CD14-positive monocyte (primary cell): ENCODE measurements at regions of chr6 and their contacts with region 1.

Region 1: DNA sequence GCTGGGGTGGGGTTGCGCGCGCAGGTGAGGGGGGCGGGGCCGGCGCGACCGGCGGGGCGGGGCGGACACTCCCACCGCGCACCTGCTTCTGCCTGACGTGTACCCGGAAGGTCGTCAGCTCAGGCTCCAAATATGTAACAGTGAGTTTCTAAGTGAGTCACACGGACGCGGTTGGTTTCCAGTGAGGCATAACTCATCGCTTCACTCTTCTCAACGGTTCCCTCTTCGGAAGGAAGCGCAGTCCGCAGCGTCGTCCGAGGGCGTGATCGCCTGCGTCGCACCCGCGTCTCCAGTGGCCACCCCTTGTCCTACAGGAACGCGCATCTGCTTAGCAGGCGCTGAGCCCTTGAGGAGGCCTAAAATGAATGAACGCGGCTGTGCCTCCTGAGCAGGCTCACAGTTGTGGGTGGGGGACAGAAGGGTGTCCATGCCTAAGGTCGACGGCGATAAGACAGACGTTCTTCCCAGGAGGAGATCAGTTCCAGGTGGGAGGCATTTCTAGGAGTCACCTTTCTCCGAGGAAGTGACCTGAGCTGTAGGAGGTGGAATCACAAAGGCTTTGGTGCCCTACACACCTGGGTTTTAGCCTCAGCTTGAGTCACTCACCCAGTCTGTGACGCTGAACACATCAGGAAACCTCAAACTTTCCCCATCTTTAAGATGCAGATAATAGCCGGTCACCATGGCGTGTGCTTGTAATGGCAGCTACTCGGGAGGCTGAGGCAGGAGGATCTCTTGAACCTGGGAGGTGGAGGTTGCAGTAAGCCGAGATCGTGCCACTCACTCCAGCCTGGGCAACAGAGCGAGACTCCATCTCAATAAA is 50.9 kb upstream of the EZR start:
- DNase-seq: peak; percentile 98 to 99 (median 99)
- H3K4me3 ChIP-seq: peak overlapping the region; percentile 39 to 72 (median 58)
- H3K4me3 Mint-ChIP-seq: peak overlapping the region; percentile 82 to 94
- H3K27ac ChIP-seq: peak overlapping the region; percentile 90 to 93
- H3K27ac Mint-ChIP-seq: peak overlapping the region; percentile 98 to 100 (median 98)
- H3K4me1 ChIP-seq: peaks cover 18 to 19% of the 10 kb centered on the region in 2 donors
- H3K4me1 Mint-ChIP-seq: peaks cover 32% of the 10 kb centered on the region
- H3K27me3 ChIP-seq: peaks cover 0 to 2% of the 10 kb centered on the region in 2 donors
- H3K27me3 Mint-ChIP-seq: peaks cover 9 to 14% (median 13%) of the 10 kb centered on the region in 3 donors
- CTCF ChIP-seq: peak; percentile 50

Region 2: DNA sequence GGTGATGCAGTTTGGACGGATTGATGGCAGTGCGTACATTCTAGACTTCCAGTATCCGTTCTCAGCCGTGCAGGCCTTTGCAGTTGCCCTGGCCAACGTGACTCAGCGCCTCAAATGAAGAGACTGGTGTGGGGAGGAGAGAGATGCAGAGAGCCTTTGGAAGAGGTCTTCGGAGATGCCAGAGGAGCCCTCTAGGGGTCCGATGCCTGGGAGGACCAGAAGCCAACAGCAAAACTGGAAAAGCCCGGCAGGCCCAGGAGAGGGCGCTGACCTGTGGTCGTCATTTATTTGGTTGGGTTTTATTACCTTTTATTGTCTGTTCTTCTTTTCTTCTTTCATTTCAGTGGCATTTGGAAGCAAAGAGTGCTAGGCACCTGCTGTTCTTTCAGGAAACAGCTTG is 363.5 kb before region 1 on chr6:
- intact Hi-C with region 1: no loop called
- DNase-seq: no peak
- H3K4me3 ChIP-seq: no peak overlapping the region
- H3K4me3 Mint-ChIP-seq: no peak overlapping the region
- H3K27ac ChIP-seq: no peak overlapping the region
- H3K27ac Mint-ChIP-seq: no peak overlapping the region
- H3K4me1 ChIP-seq: no peaks in the 10 kb centered on the region
- H3K4me1 Mint-ChIP-seq: no peaks in the 10 kb centered on the region
- H3K27me3 ChIP-seq: no peaks in the 10 kb centered on the region
- H3K27me3 Mint-ChIP-seq: peaks cover 0 to 2% (median 0%) of the 10 kb centered on the region in 3 donors
- CTCF ChIP-seq: no peak

Region 3: DNA sequence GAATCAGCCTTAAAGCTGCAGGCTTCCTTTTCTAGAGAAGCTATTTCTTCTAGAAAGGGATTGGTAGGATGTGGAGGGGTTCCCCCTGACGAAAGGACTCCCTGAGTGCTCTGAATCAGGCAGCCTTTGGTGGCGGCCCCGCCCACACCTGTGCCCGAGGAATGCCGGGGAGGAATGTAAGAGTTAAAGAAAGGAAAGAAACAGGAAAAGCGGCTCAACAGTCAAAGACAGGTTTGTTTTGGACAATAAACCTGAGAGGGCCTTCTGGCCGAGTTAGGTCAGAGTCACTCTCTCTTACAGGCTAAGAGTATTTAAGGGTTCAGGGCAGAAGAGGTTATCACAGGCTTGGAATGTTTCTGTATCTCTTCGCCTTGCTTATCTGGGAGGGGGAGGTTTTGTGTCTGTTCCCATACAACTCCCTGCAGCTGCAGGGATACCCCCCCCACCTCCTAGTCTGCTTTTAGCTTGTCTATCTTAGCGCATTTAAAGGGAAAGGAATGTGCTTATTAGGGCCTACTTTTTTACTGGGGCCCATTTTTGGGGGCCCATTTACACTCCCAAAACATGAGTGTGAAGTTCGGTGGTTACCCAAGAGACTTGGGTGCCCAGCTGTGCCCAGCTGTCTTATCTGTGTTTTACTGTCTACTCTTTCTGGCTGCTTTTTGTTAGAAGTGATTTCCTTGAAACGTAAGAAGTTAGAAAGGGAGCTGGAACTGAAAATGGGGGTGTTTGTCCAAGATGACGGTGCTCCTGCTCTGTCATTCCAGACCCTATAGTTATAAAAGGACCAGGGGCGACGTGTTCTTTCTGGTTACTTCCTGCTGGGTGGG is 258.3 kb before region 1 on chr6:
- intact Hi-C with region 1: no loop called
- DNase-seq: no peak
- H3K4me3 ChIP-seq: no peak overlapping the region
- H3K4me3 Mint-ChIP-seq: no peak overlapping the region
- H3K27ac ChIP-seq: no peak overlapping the region
- H3K27ac Mint-ChIP-seq: peak overlapping the region in 2 of 7 donors; percentile 3 to 18
- H3K4me1 ChIP-seq: no peaks in the 10 kb centered on the region
- H3K4me1 Mint-ChIP-seq: no peaks in the 10 kb centered on the region
- H3K27me3 ChIP-seq: no peaks in the 10 kb centered on the region
- H3K27me3 Mint-ChIP-seq: no peaks in the 10 kb centered on the region
- CTCF ChIP-seq: no peak

Region 4: GRCh38 chr6:158718461-158719046 is 151.5 kb before region 1 on chr6:
- intact Hi-C with region 1: loop called in 1 of 2 experiments (anchors 10 kb)
- DNase-seq: no peak
- H3K4me3 ChIP-seq: no peak overlapping the region
- H3K4me3 Mint-ChIP-seq: no peak overlapping the region
- H3K27ac ChIP-seq: peak overlapping the region in 1 of 2 donors; percentile 56
- H3K27ac Mint-ChIP-seq: peak overlapping the region in 5 of 7 donors; percentile 7 to 80 (median 36)
- H3K4me1 ChIP-seq: peaks cover 50 to 64% of the 10 kb centered on the region in 2 donors
- H3K4me1 Mint-ChIP-seq: peaks cover 61% of the 10 kb centered on the region
- H3K27me3 ChIP-seq: no peaks in the 10 kb centered on the region
- H3K27me3 Mint-ChIP-seq: peaks cover 0 to 3% (median 0%) of the 10 kb centered on the region in 3 donors
- CTCF ChIP-seq: peak; percentile 35

Region 5: DNA sequence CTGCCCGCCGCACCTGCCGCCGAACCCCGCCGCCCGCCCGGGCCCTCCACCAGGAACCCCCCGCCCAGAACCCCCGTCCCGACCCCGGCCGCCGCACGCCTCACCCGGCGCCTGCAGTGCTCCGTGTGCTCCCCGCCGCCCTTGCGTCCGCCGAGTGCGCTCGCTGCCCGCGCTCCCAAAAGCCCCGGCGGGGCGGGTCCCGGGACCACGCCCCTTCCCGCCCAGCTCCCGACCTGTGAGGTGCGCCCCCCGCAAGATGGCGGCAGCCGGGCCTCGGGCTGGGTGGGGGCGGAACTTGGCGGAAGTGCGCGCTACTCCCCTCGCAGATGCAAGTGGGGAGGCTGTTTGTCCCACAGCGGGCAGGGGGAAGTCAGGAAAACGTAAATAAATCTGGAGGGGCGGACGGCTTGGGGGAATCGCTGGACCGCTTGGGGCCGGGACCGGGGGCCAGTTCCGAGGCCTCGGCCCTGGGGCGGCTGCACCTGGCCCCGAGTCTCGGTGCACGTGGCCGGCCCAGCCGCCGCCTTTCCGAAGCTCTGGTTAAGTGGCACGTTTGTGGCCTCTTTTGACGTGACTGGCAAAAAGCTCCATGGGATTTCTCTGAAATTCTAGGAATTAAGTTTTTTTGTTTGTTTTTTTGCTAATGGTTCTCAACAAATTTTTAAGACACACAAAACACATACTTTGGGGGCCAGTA is 50.7 kb before region 1 on chr6 and contains the start of gene EZR:
- intact Hi-C with region 1: loop called (anchors 2 to 5 kb)
- DNase-seq: peak; percentile 62 to 71 (median 68)
- H3K4me3 ChIP-seq: peak within 1 kb of the TSS; percentile 57 to 88 (median 76)
- H3K4me3 Mint-ChIP-seq: peak within 1 kb of the TSS; percentile 84 to 100
- H3K27ac ChIP-seq: peak within 1 kb of the TSS; percentile 88 to 92
- H3K27ac Mint-ChIP-seq: peak within 1 kb of the TSS; percentile 85 to 98 (median 91)
- H3K4me1 ChIP-seq: peaks cover 29 to 42% of the 10 kb centered on the region in 2 donors
- H3K4me1 Mint-ChIP-seq: peaks cover 40% of the 10 kb centered on the region
- H3K27me3 ChIP-seq: no peaks in the 10 kb centered on the region
- H3K27me3 Mint-ChIP-seq: peaks cover 0 to 7% (median 3%) of the 10 kb centered on the region in 3 donors
- CTCF ChIP-seq: no peak
- polyA plus RNA-seq, gene EZR: 68.1 to 95.8 (median 86.3) TPM

Region 6: DNA sequence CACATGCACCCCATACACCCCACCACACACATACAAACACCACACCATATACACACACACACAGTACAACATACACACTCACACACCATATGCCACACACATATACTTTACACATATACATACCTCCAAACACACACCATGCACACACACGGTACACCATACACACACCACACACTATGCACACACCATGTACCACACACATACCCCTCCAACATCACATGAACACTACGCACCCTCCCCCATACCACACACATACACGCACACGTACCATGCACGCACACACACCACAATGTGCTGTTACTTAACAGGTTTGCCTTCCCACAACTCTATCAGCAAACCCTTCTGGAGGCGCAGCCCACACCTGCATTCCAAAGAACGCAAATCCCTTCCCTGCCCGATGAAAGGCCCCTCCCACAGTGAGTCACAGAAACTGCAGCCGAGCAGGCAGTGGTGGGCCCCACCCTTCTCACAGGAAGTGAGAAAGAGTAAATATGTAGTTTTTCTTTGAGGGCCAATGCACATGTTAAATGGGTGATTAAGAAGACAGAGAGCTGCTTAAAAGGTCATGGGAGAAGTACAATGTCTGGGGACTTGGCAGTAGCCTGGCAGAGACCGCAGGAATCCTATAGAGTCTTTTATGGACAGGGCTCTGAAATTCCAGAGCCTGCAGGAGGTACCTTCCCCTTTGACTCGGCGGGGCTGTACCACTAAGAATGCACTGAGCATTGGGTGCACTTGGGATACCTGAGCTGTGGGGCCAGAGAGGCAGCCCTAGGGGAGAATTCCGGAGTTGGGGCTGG is 16.8 kb before region 1 on chr6:
- intact Hi-C with region 1: loop called (anchors 2 kb)
- DNase-seq: peak; percentile 87 to 94 (median 91)
- H3K4me3 ChIP-seq: peak overlapping the region in 1 of 3 experiments; percentile 53
- H3K4me3 Mint-ChIP-seq: no peak overlapping the region
- H3K27ac ChIP-seq: peak overlapping the region; percentile 86 to 91
- H3K27ac Mint-ChIP-seq: no peak overlapping the region
- H3K4me1 ChIP-seq: peaks cover 52 to 84% of the 10 kb centered on the region in 2 donors
- H3K4me1 Mint-ChIP-seq: peaks cover 32% of the 10 kb centered on the region
- H3K27me3 ChIP-seq: no peaks in the 10 kb centered on the region
- H3K27me3 Mint-ChIP-seq: no peaks in the 10 kb centered on the region
- CTCF ChIP-seq: no peak

Region 7: DNA sequence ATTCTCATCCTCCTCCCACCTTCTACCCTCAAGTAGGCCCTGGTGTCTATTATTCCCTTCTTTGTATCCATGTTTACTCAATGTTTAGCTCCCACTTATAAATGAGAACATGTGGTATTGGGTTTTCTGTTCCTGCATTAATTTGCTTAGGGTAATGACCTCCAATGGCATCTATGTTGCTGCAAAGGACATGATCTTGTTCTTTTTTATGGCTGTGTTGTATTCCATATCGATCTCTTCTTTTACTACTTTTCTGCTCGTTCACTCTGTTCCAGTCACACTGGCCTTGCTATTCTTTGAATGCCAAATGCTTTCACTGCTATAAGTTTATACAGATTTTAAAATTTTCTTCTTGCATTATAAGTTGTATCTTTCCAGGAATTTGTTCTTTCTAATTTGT is 72.3 kb after region 1 on chr6:
- intact Hi-C with region 1: no loop called
- DNase-seq: no peak
- H3K4me3 ChIP-seq: no peak overlapping the region
- H3K4me3 Mint-ChIP-seq: no peak overlapping the region
- H3K27ac ChIP-seq: no peak overlapping the region
- H3K27ac Mint-ChIP-seq: no peak overlapping the region
- H3K4me1 ChIP-seq: peaks cover 11 to 12% of the 10 kb centered on the region in 2 donors
- H3K4me1 Mint-ChIP-seq: peaks cover 19% of the 10 kb centered on the region
- H3K27me3 ChIP-seq: peaks cover 0 to 4% of the 10 kb centered on the region in 2 donors
- H3K27me3 Mint-ChIP-seq: peaks cover 6 to 24% (median 8%) of the 10 kb centered on the region in 3 donors
- CTCF ChIP-seq: no peak

Region 8: GRCh38 chr6:158999666-159000403 is 129.8 kb after region 1 on chr6 and contains the start of gene RSPH3:
- intact Hi-C with region 1: loop called in 1 of 2 experiments (anchors 10 kb)
- DNase-seq: peak; percentile 74 to 79 (median 75)
- H3K4me3 ChIP-seq: peak within 1 kb of the TSS; percentile 61 to 90 (median 80)
- H3K4me3 Mint-ChIP-seq: peak within 1 kb of the TSS; percentile 99 to 100
- H3K27ac ChIP-seq: peak within 1 kb of the TSS; percentile 82 to 87
- H3K27ac Mint-ChIP-seq: peak within 1 kb of the TSS; percentile 90 to 96 (median 95)
- H3K4me1 ChIP-seq: peaks cover 34 to 48% of the 10 kb centered on the region in 2 donors
- H3K4me1 Mint-ChIP-seq: peaks cover 43% of the 10 kb centered on the region
- H3K27me3 ChIP-seq: no peaks in the 10 kb centered on the region
- H3K27me3 Mint-ChIP-seq: peaks cover 0 to 3% (median 1%) of the 10 kb centered on the region in 3 donors
- CTCF ChIP-seq: no peak
- polyA plus RNA-seq, gene RSPH3: 2.8 to 9.6 (median 4.6) TPM